ENCODE measurements at regions of chr6 and their contacts with region 1.

Region 1: DNA sequence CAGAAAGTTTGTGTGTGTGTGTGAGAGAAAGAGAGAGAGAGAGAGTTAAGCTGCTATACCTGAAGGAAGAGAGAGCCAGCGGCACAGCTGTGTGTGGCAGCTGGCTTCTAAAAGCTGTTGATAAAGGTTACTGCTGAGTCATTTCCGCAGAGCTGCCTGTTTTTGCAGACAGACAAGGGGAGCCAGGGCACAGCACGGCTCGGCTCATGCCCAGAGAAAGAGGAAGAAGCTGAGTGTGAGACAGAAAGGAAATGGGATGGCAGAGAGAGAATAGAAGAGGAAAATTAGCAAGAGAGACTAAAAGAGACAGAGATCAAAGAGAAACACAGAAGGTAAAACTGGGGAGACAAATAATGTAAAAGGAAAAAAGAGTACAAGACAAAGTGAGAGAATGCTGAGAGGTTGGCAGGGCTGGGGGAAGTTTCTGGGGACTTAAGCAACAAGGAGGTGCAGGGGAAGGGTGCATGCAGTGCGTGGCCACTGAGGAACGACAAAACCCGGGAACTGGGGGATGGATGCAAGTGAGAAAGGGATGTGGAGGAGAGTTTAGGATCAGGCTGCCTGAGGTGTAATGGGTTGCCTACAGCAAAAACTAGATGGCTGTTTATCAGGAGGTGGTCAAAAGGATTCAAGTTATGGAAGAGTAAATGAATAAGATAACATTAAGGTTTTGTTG is 22.7 kb downstream of the HLA-A start:
- DNase-seq: peak; percentile 76
- H3K4me3 Mint-ChIP-seq: peak overlapping the region; percentile 92
- H3K27ac Mint-ChIP-seq: peak overlapping the region; percentile 97
- H3K4me1 Mint-ChIP-seq: peaks cover 40% of the 10 kb centered on the region
- H3K27me3 Mint-ChIP-seq: peaks cover 1% of the 10 kb centered on the region

Region 2: GRCh38 chr6:29887819-29888776 is 76.9 kb before region 1 on chr6:
- intact Hi-C with region 1: loop called (anchors 1 kb)
- DNase-seq: peak; percentile 83
- H3K4me3 Mint-ChIP-seq: peak overlapping the region; percentile 87
- H3K27ac Mint-ChIP-seq: peak overlapping the region; percentile 93
- H3K4me1 Mint-ChIP-seq: peaks cover 17% of the 10 kb centered on the region
- H3K27me3 Mint-ChIP-seq: peaks cover 9% of the 10 kb centered on the region

Region 3: GRCh38 chr6:29942275-29943052 is 22.6 kb before region 1 on chr6 and contains the start of gene HLA-A:
- intact Hi-C with region 1: loop called (anchors 1 kb)
- DNase-seq: peak; percentile 88
- H3K4me3 Mint-ChIP-seq: peak within 1 kb of the TSS; percentile 95
- H3K27ac Mint-ChIP-seq: peak within 1 kb of the TSS; percentile 98
- H3K4me1 Mint-ChIP-seq: peaks cover 57% of the 10 kb centered on the region
- H3K27me3 Mint-ChIP-seq: no peaks in the 10 kb centered on the region
- total RNA-seq, gene HLA-A: 1,482 and 1,503 TPM in 2 replicates

Region 4: GRCh38 chr6:30013291-30013922 is 48.4 kb after region 1 on chr6:
- intact Hi-C with region 1: loop called (anchors 2 kb)
- DNase-seq: peak; percentile 27
- H3K4me3 Mint-ChIP-seq: no peak overlapping the region
- H3K27ac Mint-ChIP-seq: no peak overlapping the region
- H3K4me1 Mint-ChIP-seq: no peaks in the 10 kb centered on the region
- H3K27me3 Mint-ChIP-seq: peaks cover 9% of the 10 kb centered on the region

Region 5: GRCh38 chr6:30752157-30752927 is 787.3 kb after region 1 on chr6:
- intact Hi-C with region 1: no loop called
- DNase-seq: no peak
- H3K4me3 Mint-ChIP-seq: no peak overlapping the region
- H3K27ac Mint-ChIP-seq: peak overlapping the region; percentile 19
- H3K4me1 Mint-ChIP-seq: peaks cover 22% of the 10 kb centered on the region
- H3K27me3 Mint-ChIP-seq: peaks cover 1% of the 10 kb centered on the region